HEK293T (cell line): ENCODE measurements at regions of chr1 and their contacts with region 1.

Region 1: GRCh38 chr1:150311762-150312161 is 9.6 kb upstream of the PRPF3 start:
- DNase-seq: no peak

Region 2: GRCh38 chr1:150387200-150387599 is 75.4 kb after region 1 on chr1:
- CTCF ChIA-PET with region 1: no interaction called
- POLR2A ChIA-PET with region 1: no interaction called
- DNase-seq: no peak

Region 3: DNA sequence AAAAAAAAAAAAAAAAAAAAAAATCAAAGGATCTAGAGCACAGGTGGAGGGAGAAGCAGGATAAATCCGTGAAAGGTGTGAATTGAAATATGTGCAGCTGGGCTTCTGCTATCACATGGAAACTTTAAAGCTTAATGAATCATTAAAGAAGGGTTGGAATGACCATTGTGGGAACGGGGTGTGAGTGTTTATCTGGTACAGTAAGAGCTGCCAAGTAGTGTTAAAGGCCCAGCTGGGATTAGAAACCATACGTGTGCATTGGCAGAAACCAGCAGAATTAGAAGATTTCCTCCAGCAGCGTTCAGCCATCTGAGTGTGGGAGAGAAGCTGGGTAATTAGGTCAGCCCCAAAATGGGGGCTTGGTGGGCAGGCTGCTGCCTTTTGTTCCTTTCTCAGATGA is 217.3 kb after region 1 on chr1:
- CTCF ChIA-PET with region 1: interaction called, 14 read pairs
- POLR2A ChIA-PET with region 1: no interaction called
- DNase-seq: no peak